H1 (cell line): ENCODE measurements at regions of chr2 and their contacts with region 1.

Region 1: DNA sequence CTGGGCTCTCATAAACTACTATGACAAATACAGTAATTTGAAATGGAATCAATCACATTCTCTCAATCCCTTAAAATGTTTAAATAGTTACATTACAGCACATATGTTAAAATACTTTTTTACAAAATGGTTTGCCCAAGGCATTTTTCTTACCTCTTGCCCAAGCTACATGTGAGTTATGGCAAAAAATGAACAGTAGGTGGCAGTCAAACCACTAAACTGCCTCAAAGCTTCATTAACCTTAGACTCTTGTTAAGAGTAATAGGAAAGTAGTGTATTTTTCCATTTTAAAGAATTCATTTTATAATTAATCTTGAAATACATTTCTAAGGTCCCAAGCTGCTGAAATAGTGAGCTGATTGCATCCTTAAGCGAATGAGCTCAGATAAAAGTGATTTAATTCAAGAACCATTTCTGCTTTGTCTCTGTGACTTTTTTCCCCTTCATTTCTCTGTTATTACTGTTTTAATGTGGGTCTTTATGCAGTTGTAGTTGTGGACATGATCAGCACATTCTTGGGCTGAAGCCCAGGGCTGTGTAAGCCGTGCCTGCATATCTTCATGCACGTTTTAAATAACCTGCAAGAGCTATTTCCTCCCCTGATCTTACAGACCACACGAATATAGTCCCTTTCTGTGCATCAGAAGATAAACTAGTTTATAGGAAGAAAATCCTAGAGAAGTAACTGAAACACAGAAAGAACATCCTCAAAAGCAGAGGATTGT is 311.8 kb downstream of the LNPK start:
- DNase-seq: peak in 1 of 2 experiments; percentile 15
- H3K4me3 ChIP-seq: no peak overlapping the region
- H3K27ac ChIP-seq: no peak overlapping the region
- H3K4me1 ChIP-seq: no peaks in the 10 kb centered on the region
- H3K27me3 ChIP-seq: no peaks in the 10 kb centered on the region
- CTCF ChIP-seq: peak in 2 of 3 experiments; percentile 60 to 62; a peak in 3 of 4 replicates
- EP300 ChIP-seq: no peak
- POLR2A ChIP-seq: no peak
- RAD21 ChIP-seq: peak; percentile 86 to 88

Region 2: DNA sequence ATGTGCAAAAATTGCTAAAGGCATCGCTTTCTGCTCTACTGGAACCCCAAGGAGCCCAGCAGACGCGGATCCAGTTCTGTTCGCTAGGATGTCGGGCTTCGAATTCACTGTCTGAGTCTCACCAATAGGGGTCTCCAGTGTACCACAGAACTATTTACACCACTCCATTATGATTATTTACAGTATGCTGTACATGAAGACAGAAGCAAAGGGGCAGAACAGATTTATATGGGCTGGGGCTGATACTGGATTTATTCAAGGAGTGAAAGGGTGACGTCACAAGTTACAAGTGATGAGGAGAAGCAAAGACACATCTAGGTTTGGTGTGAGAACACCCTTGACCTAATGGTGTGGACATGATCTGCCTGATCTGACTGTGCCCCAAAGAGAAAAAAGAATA is 323.5 kb before region 1 on chr2:
- CTCF ChIA-PET with region 1: interaction called, 21 read pairs
- POLR2A ChIA-PET with region 1: no interaction called
- DNase-seq: peak; percentile 10 to 53
- H3K4me3 ChIP-seq: no peak overlapping the region
- H3K27ac ChIP-seq: no peak overlapping the region
- H3K4me1 ChIP-seq: no peaks in the 10 kb centered on the region; a peak in 1 of 7 replicates
- H3K27me3 ChIP-seq: no peaks in the 10 kb centered on the region
- CTCF ChIP-seq: peak; percentile 51 to 89 (median 85)
- EP300 ChIP-seq: no peak
- POLR2A ChIP-seq: no peak
- RAD21 ChIP-seq: peak; percentile 92 to 93

Region 3: DNA sequence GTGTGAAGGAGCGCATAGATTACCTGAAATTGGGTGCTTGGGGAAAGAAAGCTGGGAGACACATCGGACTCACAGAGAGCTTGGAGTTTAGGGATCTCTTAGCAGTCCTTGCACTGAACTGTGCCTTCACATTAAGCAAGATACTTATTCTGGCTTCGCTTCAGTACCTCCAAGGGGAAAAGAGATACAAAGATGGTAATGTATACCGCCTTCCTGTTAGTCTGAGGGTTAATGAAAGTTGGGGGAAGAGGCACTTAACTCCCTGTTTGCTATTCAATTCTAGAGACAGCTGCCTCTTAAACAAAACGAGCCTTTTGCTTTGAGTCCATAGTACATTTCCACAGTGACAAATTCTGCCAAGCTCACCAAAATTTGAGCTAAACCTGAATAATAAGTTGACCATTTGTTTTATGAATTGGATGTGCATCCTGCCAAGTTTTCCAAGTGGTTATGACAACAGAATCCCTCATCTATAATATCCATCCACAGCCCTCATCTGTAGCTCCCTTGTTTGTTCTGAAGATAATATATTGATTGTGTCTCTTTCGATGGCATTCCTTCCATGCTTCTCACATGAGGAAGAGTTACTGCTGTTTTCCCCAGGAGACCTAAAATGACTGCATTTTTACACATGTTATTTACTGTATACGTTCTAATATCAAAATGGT is 221.7 kb before region 1 on chr2:
- CTCF ChIA-PET with region 1: no interaction called
- POLR2A ChIA-PET with region 1: no interaction called
- DNase-seq: no peak
- H3K4me3 ChIP-seq: no peak overlapping the region
- H3K27ac ChIP-seq: no peak overlapping the region
- H3K4me1 ChIP-seq: peaks cover 0 to 1% (median 0%) of the 10 kb centered on the region in 4 experiments; a peak in 2 of 7 replicates
- H3K27me3 ChIP-seq: peaks cover 0 to 2% (median 0%) of the 10 kb centered on the region in 4 experiments; a peak in 1 of 7 replicates
- CTCF ChIP-seq: no peak
- EP300 ChIP-seq: no peak
- POLR2A ChIP-seq: no peak
- RAD21 ChIP-seq: no peak

Region 4: DNA sequence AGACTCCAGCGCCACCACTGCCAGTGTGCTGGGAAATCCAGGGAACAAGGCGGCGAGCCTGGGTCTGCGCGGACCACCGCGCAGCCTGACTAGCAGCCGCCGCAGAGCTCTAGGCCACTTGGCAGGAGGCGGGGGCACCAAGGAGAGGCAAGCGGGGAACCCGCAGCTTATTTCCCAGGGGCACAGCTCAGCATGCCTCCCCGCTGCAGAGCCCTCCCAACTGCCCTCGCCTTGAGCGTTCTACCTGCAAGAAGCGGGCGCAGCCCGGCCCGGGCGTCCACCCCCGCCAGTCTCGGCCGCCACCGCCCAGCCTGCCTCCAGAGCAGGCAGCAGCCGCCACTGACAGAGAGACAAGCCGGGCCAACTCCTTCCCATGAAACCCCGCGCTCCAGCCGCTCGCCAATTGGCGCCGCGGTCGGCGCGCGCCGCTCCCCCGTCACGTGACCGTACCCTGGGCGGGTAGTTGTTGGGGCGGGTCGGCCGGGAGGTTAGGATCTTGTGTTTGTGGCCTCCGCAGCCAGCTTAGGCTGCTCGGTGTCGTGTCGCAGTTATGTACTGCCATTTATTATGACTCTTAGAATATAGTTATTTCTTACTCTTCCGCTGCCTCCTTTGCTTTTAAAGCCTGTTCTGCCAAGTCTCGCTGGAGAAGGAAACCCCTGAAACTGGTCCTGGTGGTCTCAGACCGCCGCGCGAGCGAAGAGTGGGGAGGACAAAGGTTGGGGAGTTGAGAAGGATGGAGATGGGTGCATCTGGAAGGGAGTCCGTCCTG is 311.8 kb after region 1 on chr2 and contains the start of gene LNPK:
- CTCF ChIA-PET with region 1: interaction called, 12 read pairs
- POLR2A ChIA-PET with region 1: no interaction called
- DNase-seq: peak; percentile 65 to 95
- H3K4me3 ChIP-seq: peak within 1 kb of the TSS; percentile 60 to 89 (median 74)
- H3K27ac ChIP-seq: no peak within 1 kb of the TSS
- H3K4me1 ChIP-seq: peaks cover 0 to 10% (median 5%) of the 10 kb centered on the region in 4 experiments; a peak in 5 of 7 replicates
- H3K27me3 ChIP-seq: peaks cover 0 to 9% (median 5%) of the 10 kb centered on the region in 4 experiments; a peak in 5 of 7 replicates
- CTCF ChIP-seq: no peak
- EP300 ChIP-seq: no peak
- POLR2A ChIP-seq: peak in 1 of 2 experiments; percentile 69; a peak in 2 of 3 replicates
- RAD21 ChIP-seq: no peak; a peak in 1 of 4 replicates
- total RNA-seq, gene LNPK: 10.3 and 11.8 TPM in 2 replicates

Region 5: GRCh38 chr2:176072951-176073904 is 383.0 kb after region 1 on chr2:
- CTCF ChIA-PET with region 1: interaction called, 15 read pairs
- POLR2A ChIA-PET with region 1: no interaction called
- DNase-seq: peak in 1 of 2 experiments; percentile 57
- H3K4me3 ChIP-seq: no peak overlapping the region
- H3K27ac ChIP-seq: no peak overlapping the region
- H3K4me1 ChIP-seq: peaks cover 3 to 9% (median 6%) of the 10 kb centered on the region in 4 experiments; a peak in 5 of 7 replicates
- H3K27me3 ChIP-seq: peaks cover 90 to 100% (median 96%) of the 10 kb centered on the region in 4 experiments
- CTCF ChIP-seq: peak in 2 of 3 experiments; percentile 8 to 10; a peak in 2 of 4 replicates
- EP300 ChIP-seq: no peak
- POLR2A ChIP-seq: no peak
- RAD21 ChIP-seq: no peak

Region 6: DNA sequence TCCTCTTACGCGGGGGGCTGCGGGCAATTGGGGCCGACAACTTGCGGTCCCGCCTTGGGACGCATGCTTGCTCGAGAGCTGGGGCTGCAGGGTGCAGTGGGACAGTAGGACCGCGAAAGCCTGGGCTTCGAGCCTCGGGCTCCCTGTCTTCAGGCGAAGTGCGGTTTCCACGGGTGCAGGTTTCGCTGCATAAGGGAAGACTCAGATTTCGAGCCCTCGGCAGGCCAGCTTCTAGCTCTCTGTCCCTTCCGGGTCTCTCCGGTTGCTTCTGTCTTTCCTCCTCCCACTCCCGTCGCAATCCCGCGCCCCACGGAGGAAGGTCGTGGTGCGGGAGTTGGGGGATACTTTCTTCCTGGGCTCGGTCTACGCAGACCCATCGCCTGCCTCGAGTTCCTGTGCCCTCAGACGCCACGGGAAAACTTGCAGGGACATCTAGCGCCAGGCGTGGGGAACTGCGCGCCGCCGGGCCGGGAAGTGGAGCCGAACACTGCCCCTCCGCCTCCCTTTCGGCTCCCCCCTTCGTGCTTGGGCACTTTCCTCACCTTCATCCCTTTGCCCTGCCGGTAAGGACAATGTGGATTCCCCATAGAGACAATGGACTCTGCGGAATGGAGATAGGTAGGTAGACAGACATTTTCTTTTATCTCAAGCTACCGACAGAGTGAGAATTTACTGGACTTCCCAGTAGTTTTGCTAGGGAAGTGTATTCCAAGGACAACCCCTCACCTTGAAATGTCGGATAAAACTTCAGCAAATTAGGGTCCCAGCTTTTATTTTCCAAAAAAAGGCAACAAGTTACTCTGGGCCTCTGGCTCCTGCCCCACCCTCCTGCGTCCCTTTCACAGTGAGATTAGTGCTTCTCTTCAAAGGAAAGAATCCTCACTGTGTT is 398.0 kb after region 1 on chr2:
- CTCF ChIA-PET with region 1: interaction called, 14 read pairs
- POLR2A ChIA-PET with region 1: no interaction called
- DNase-seq: peak in 1 of 2 experiments; percentile 80
- H3K4me3 ChIP-seq: peak overlapping the region in 3 of 4 experiments; percentile 28 to 55 (median 34); a peak in 5 of 8 replicates
- H3K27ac ChIP-seq: no peak overlapping the region
- H3K4me1 ChIP-seq: peaks cover 0 to 15% (median 8%) of the 10 kb centered on the region in 4 experiments; a peak in 6 of 7 replicates
- H3K27me3 ChIP-seq: peaks cover 94 to 100% (median 99%) of the 10 kb centered on the region in 4 experiments
- CTCF ChIP-seq: peak in 2 of 3 experiments; percentile 42 to 64; a peak in 3 of 4 replicates
- EP300 ChIP-seq: no peak
- POLR2A ChIP-seq: no peak
- RAD21 ChIP-seq: peak; percentile 48 to 61